ENCODE measurements at regions of chr2 and their contacts with region 1.

Region 1: GRCh38 chr2:119759451-119760236 is at the start of gene PTPN4:
- DNase-seq: peak; percentile 98
- ATAC-seq: peak; percentile 93
- H3K4me3 Mint-ChIP-seq: peak within 1 kb of the TSS; percentile 72
- H3K27ac Mint-ChIP-seq: peak within 1 kb of the TSS; percentile 93
- H3K4me1 Mint-ChIP-seq: peaks cover 43% of the 10 kb centered on the region
- H3K27me3 Mint-ChIP-seq: no peaks in the 10 kb centered on the region
- total RNA-seq, gene PTPN4: 32.4 to 38.0 TPM

Region 2: DNA sequence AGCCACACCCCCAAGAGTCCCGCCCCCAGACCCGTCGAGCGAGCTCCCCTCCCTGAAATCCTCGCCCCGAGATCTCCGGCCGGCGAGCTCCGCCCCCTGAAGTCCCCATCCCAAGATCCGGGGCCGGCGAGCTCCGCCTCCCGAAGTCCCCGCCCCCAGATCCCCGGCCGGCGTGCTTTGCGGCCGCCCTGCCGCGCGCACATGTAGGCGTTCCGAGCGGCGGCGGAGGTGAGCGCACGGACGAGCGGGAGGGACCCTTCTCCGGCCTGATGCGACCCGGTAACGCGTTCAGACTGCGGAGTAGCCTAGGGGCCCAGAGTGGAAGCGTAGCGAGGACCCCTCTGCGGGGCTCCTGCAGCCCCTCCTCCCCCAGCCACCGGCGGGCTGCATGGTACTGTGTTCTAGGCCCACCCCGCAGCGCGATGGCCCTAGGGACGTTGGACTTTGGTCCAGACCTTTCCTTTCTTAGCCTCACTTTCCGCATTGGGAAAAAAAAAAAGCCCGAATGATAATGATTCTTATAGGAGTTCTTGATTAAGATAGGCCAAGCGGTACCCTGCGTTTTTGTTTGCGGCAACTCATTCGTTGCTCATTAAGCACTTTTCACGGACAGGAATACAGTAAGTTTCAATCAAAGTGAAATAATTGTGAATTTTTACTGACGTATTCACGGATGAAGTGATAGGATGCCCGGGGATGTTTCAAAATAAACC is 80.5 kb before region 1 on chr2 and contains the start of gene TMEM177:
- CTCF ChIA-PET with region 1: interaction called, 5 read pairs
- POLR2A ChIA-PET with region 1: no interaction called
- intact Hi-C with region 1: loop called (anchors 1 kb)
- DNase-seq: peak; percentile 94
- ATAC-seq: peak; percentile 93
- H3K4me3 Mint-ChIP-seq: peak within 1 kb of the TSS; percentile 87
- H3K27ac Mint-ChIP-seq: peak within 1 kb of the TSS; percentile 88
- H3K4me1 Mint-ChIP-seq: peaks cover 33% of the 10 kb centered on the region
- H3K27me3 Mint-ChIP-seq: no peaks in the 10 kb centered on the region
- total RNA-seq, gene TMEM177: 13.6 to 15.8 TPM

Region 3: GRCh38 chr2:119821266-119821665 is 61.6 kb after region 1 on chr2:
- CTCF ChIA-PET with region 1: interaction called, 17 read pairs
- POLR2A ChIA-PET with region 1: no interaction called
- intact Hi-C with region 1: loop called in 1 of 2 experiments (anchors 1 kb)
- DNase-seq: peak; percentile 51
- ATAC-seq: peak; percentile 87
- H3K4me3 Mint-ChIP-seq: no peak overlapping the region
- H3K27ac Mint-ChIP-seq: no peak overlapping the region
- H3K4me1 Mint-ChIP-seq: peaks cover 44% of the 10 kb centered on the region
- H3K27me3 Mint-ChIP-seq: no peaks in the 10 kb centered on the region

Region 4: DNA sequence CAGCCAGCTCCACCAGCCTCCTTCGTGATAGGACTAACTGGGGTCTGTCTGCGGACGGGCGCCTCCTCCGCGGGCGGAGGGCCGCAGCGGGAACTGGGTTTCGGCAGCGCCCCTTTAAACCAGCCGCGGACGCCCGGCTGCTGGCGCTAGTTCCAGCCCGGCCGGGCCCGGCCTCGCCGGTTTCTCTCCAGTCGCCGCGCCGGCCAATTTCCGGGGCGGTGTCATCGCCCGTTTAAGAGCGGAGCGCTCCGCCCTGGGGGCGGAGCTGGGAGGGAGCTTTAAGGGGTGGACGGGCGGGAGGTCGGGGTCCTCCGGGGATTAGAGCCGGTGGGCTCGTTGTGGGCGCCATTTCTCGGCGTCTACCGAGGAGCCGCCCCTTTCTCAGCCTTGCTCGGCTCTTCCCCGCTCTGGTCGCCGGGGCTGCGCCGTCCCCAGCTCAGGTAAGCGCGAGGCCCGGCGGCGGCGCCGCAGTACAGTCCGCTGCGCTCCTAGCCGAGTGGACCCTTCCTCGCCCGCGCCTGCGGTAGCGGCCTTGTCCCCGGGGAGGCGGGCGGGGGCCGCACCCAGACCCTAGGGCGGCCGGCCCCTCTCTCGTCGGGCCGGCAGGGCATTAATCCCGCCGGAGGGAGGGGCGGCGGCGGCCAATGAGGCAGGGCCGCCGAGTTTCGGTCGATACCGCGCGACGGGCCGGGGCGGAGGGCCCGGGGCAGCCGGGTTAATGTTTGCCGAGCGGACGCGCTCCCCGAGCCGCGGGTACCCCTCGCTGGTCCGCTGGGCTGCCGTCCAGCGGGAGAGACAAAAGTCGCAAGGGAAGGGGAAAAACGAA is 253.3 kb after region 1 on chr2 and contains the start of gene EPB41L5:
- CTCF ChIA-PET with region 1: no interaction called
- POLR2A ChIA-PET with region 1: interaction called, 3 read pairs
- intact Hi-C with region 1: loop called (anchors 1 to 5 kb)
- DNase-seq: peak; percentile 90
- ATAC-seq: peak; percentile 95
- H3K4me3 Mint-ChIP-seq: peak within 1 kb of the TSS; percentile 73
- H3K27ac Mint-ChIP-seq: peak within 1 kb of the TSS; percentile 66
- H3K4me1 Mint-ChIP-seq: peaks cover 19% of the 10 kb centered on the region
- H3K27me3 Mint-ChIP-seq: no peaks in the 10 kb centered on the region
- total RNA-seq, gene EPB41L5: 2.2 to 2.4 TPM

Region 5: GRCh38 chr2:120252225-120253021 is 492.8 kb after region 1 on chr2 and contains the start of gene RALB:
- CTCF ChIA-PET with region 1: no interaction called
- POLR2A ChIA-PET with region 1: no interaction called
- intact Hi-C with region 1: loop called in 1 of 2 experiments (anchors 10 kb)
- DNase-seq: peak; percentile 100
- ATAC-seq: peak; percentile 95
- H3K4me3 Mint-ChIP-seq: peak within 1 kb of the TSS; percentile 92
- H3K27ac Mint-ChIP-seq: peak within 1 kb of the TSS; percentile 86
- H3K4me1 Mint-ChIP-seq: peaks cover 41% of the 10 kb centered on the region
- H3K27me3 Mint-ChIP-seq: peaks cover 6% of the 10 kb centered on the region
- total RNA-seq, gene RALB: 34.0 to 34.3 TPM

Measured in activated CD4-positive, alpha-beta T cell treated with anti-CD3 and anti-CD28 coated beads for 36 hours (primary cell).